Natural killer cell (primary cell): ENCODE measurements at regions of chr2 and their contacts with region 1.

Region 1: DNA sequence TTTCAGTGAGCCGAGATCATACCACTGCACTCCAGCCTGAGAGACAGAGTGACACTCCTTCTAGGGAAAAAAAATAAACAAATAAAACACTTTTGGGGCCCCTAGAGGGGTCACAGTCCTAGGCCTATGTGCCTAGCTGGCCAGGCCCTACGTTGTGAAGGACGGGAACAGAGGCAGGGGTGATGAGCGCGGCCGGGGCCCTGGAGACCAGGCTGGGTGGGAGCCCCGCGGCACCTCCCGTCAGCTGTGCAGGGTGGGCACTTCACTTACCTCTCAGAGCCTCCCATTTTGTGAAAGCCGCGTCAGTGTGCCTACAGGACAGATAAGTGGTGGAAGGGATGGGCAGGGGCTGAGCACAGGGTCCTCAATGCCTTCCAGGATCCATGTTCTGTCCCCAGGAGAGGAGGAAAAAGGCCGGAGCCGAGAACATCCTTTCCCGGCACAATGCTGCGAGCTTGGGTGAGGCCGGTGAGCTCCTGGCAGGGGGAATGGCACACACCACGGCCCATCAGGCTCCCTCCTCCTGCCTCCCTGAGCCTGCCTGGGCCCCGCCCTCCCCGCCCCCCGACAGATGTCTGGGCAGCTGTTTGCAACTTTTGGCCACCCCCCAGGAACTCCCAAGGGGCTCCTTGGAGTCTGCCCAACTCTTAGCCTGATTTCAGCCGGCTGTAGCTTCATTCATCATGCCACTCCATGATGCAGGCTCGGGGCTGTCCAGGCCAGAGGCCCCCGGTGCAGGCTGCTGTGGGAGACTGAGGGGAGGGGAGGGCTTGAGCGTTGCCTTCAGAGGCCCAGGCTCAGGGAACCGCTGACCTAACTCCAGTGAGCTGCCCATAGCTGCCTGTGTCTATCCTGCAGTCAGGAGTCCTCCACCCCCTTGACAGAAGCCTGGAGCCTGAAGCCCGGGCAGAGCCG is 196.5 kb downstream of the TFCP2L1 start:
- DNase-seq: no peak
- ATAC-seq: no peak
- H3K4me3 ChIP-seq: no peak overlapping the region
- H3K4me3 Mint-ChIP-seq: no peak overlapping the region
- H3K27ac ChIP-seq: no peak overlapping the region
- H3K27ac Mint-ChIP-seq: no peak overlapping the region
- H3K4me1 ChIP-seq: no peaks in the 10 kb centered on the region
- H3K4me1 Mint-ChIP-seq: no peaks in the 10 kb centered on the region
- H3K27me3 ChIP-seq: no peaks in the 10 kb centered on the region
- H3K27me3 Mint-ChIP-seq: no peaks in the 10 kb centered on the region
- CTCF ChIP-seq: no peak

Region 2: GRCh38 chr2:121356058-121356640 is 267.6 kb after region 1 on chr2:
- intact Hi-C with region 1: loop called (anchors 5 kb)
- DNase-seq: peak in 1 of 2 donors; percentile 46
- ATAC-seq: peak; percentile 52 to 62 (median 58)
- H3K4me3 ChIP-seq: no peak overlapping the region
- H3K4me3 Mint-ChIP-seq: no peak overlapping the region
- H3K27ac ChIP-seq: no peak overlapping the region
- H3K27ac Mint-ChIP-seq: peak overlapping the region in 1 of 2 donors; percentile 17
- H3K4me1 ChIP-seq: no peaks in the 10 kb centered on the region
- H3K4me1 Mint-ChIP-seq: peaks cover 3 to 6% of the 10 kb centered on the region in 2 donors
- H3K27me3 ChIP-seq: no peaks in the 10 kb centered on the region
- H3K27me3 Mint-ChIP-seq: no peaks in the 10 kb centered on the region
- CTCF ChIP-seq: peak; percentile 59